ENCODE measurements at regions of chr3 and their contacts with region 1.

Region 1: GRCh38 chr3:141561426-141562034 is 74.7 kb downstream of the RASA2 start:
- DNase-seq: no peak
- ATAC-seq: peak; percentile 54 to 67
- H3K4me3 ChIP-seq: no peak overlapping the region
- H3K27ac ChIP-seq: no peak overlapping the region
- H3K4me1 ChIP-seq: no peaks in the 10 kb centered on the region
- H3K27me3 ChIP-seq: no peaks in the 10 kb centered on the region
- CTCF ChIP-seq: peak; percentile 88

Region 2: DNA sequence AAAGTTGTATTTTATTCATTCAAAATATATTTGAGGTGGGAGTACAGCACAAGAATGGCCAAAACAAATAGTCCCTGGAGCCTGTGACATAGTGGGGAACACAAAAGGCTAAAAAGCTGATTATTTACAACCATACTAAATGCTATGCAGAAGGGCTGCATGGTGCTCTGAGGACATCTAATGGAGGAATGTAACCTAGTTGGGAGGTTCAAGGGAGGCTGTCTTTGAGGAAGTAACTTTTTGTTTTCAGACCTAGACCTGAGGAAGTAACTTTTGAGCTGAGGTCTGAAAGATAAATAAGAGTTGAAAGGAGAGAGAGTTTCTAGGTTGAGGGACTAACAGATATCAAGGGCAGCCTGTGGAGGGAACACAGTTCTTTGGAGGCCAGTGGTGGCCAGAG is 109.5 kb before region 1 on chr3:
- intact Hi-C with region 1: loop called (anchors 5 kb)
- DNase-seq: no peak
- ATAC-seq: peak; percentile 57 to 76
- H3K4me3 ChIP-seq: no peak overlapping the region
- H3K27ac ChIP-seq: no peak overlapping the region
- H3K4me1 ChIP-seq: peaks cover 24% of the 10 kb centered on the region
- H3K27me3 ChIP-seq: no peaks in the 10 kb centered on the region
- CTCF ChIP-seq: peak; percentile 64

Region 3: GRCh38 chr3:141471160-141471559 is 90.4 kb before region 1 on chr3:
- intact Hi-C with region 1: loop called (anchors 5 kb)
- DNase-seq: no peak
- ATAC-seq: no peak
- H3K4me3 ChIP-seq: no peak overlapping the region
- H3K27ac ChIP-seq: no peak overlapping the region
- H3K4me1 ChIP-seq: no peaks in the 10 kb centered on the region
- H3K27me3 ChIP-seq: no peaks in the 10 kb centered on the region
- CTCF ChIP-seq: no peak

Region 4: DNA sequence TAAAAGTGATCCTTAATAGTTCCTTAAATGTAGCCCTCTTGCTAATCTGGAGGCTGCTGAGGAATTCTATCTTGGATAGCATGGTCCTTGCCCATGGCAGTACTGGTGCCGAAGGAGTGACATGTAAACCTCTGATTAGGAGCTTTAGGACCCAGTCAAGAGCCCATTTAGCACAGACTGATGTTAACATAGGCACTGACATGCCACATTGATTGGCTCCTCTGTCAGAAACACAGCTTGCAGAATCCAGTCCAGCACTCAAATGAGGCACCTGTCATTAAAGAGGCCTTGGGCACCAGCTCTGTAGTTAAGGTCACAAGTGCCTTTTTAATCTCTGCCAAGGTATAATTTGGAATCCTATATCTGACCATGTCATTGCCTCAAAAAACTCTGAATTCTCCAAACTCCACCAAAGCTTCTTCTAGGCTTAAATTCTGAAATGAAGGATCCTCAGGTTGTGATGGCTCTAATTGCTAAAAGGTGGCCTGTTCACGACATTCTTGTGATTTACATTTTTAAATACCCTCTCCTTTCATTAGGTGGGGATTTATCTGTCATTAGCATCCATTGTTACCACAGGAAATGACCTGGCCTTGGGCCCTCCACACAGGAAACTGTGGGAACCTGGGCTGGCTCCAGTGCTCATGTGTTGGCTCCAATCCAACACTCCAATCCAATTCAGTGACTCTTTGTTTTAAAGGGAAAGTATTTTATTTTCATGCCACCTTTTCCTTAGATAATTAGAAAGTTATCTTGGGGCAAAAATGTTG is 119.3 kb after region 1 on chr3:
- intact Hi-C with region 1: no loop called
- DNase-seq: no peak
- ATAC-seq: peak; percentile 47 to 58
- H3K4me3 ChIP-seq: no peak overlapping the region
- H3K27ac ChIP-seq: peak overlapping the region; percentile 53
- H3K4me1 ChIP-seq: peaks cover 17% of the 10 kb centered on the region
- H3K27me3 ChIP-seq: no peaks in the 10 kb centered on the region
- CTCF ChIP-seq: no peak

Measured in lower lobe of right lung (tissue), 2 donors.